ENCODE measurements at regions of chr11 and their contacts with region 1.

Region 1: GRCh38 chr11:10606536-10607208 is 38.2 kb upstream of the LYVE1 start:
- DNase-seq: peak; percentile 68
- ATAC-seq: peak; percentile 82
- H3K4me3 ChIP-seq: peak overlapping the region in 4 of 5 experiments; percentile 33 to 74 (median 50)
- H3K4me3 Mint-ChIP-seq: peak overlapping the region; percentile 83
- H3K27ac ChIP-seq: peak overlapping the region; percentile 84 to 91
- H3K27ac Mint-ChIP-seq: peak overlapping the region; percentile 97
- H3K4me1 ChIP-seq: peaks cover 90 to 97% of the 10 kb centered on the region in 2 donors
- H3K4me1 Mint-ChIP-seq: peaks cover 98% of the 10 kb centered on the region
- H3K27me3 ChIP-seq: no peaks in the 10 kb centered on the region
- H3K27me3 Mint-ChIP-seq: no peaks in the 10 kb centered on the region
- CTCF ChIP-seq: no peak

Region 2: DNA sequence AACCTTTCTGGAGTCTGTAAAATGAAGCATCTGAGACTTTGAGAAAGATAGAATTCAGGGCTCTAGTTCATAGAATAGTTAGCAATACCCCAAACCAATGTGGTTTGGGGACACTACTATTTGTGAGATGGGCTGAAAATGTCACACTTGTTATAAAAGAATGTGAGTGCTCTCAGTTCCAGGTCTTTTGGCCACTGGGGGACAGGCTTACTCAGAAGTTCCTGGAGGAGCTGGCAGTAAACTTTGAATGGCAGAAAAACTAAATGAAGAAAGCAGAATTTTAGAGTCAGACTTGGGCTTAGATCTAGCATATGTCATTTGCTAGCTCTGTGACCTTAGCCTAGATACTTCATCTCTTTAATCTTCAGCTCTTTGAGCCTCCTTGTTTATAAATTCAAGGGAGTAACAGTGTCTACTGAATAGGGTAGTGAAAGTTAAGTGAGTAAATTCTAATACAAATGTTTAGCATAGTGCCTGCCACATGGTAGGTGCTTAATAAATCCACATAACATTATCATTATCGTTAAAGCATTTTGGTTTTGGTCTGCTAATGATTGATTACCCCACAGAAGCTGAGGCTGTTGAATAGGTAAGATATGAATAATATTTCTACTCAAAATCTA is 41.9 kb before region 1 on chr11:
- CTCF ChIA-PET with region 1: interaction called, 12 read pairs
- POLR2A ChIA-PET with region 1: interaction called, 6 read pairs
- intact Hi-C with region 1: no loop called
- DNase-seq: peak; percentile 55
- ATAC-seq: peak; percentile 43
- H3K4me3 ChIP-seq: no peak overlapping the region
- H3K4me3 Mint-ChIP-seq: no peak overlapping the region
- H3K27ac ChIP-seq: peak overlapping the region in 1 of 2 donors; percentile 14
- H3K27ac Mint-ChIP-seq: peak overlapping the region; percentile 71
- H3K4me1 ChIP-seq: peaks cover 17 to 35% of the 10 kb centered on the region in 2 donors
- H3K4me1 Mint-ChIP-seq: peaks cover 53% of the 10 kb centered on the region
- H3K27me3 ChIP-seq: no peaks in the 10 kb centered on the region
- H3K27me3 Mint-ChIP-seq: no peaks in the 10 kb centered on the region
- CTCF ChIP-seq: peak; percentile 22

Region 3: DNA sequence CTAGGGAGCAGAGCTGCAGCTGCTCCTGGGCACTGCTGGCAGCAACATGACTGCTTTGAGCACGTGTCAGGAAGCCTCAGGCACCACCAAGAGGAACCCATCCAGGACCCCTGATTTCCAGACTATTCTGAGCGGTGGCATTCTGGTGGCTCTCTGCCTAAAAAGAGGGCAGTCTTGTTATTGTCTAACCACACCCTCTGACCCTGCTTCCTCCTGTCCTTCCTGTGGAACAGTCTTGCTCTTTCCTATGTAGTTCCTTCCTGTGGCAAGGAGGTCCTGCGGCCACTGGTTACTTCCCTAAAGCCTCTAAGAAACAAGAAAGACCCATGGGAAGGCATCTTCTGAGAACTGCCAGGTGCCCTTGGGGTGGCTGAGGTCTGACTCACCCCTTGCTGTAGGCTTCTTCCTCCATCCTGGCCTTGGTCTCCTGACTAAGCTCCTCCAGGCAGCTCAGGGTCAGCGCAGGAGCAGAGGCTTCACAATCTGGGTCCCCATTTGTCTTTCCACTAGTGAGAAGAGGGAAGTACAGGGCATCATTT is 25.1 kb before region 1 on chr11:
- CTCF ChIA-PET with region 1: interaction called, 16 read pairs
- POLR2A ChIA-PET with region 1: no interaction called
- intact Hi-C with region 1: no loop called
- DNase-seq: peak; percentile 35
- ATAC-seq: peak; percentile 65
- H3K4me3 ChIP-seq: peak overlapping the region in 1 of 5 experiments; percentile 12
- H3K4me3 Mint-ChIP-seq: peak overlapping the region; percentile 20
- H3K27ac ChIP-seq: peak overlapping the region; percentile 31 to 70
- H3K27ac Mint-ChIP-seq: peak overlapping the region; percentile 78
- H3K4me1 ChIP-seq: peaks cover 55 to 67% of the 10 kb centered on the region in 2 donors
- H3K4me1 Mint-ChIP-seq: peaks cover 77% of the 10 kb centered on the region
- H3K27me3 ChIP-seq: no peaks in the 10 kb centered on the region
- H3K27me3 Mint-ChIP-seq: no peaks in the 10 kb centered on the region
- CTCF ChIP-seq: no peak

Region 4: GRCh38 chr11:10641177-10641911 is 34.7 kb after region 1 on chr11:
- CTCF ChIA-PET with region 1: no interaction called
- POLR2A ChIA-PET with region 1: interaction called, 6 read pairs
- intact Hi-C with region 1: loop called (anchors 2 kb)
- DNase-seq: peak; percentile 77
- ATAC-seq: peak; percentile 87
- H3K4me3 ChIP-seq: peak overlapping the region in 1 of 5 experiments; percentile 35
- H3K4me3 Mint-ChIP-seq: peak overlapping the region; percentile 74
- H3K27ac ChIP-seq: peak overlapping the region; percentile 87 to 88
- H3K27ac Mint-ChIP-seq: peak overlapping the region; percentile 94
- H3K4me1 ChIP-seq: peaks cover 55 to 79% of the 10 kb centered on the region in 2 donors
- H3K4me1 Mint-ChIP-seq: peaks cover 81% of the 10 kb centered on the region
- H3K27me3 ChIP-seq: no peaks in the 10 kb centered on the region
- H3K27me3 Mint-ChIP-seq: no peaks in the 10 kb centered on the region
- CTCF ChIP-seq: no peak

Measured in B cell (primary cell).